ENCODE measurements at regions of chr7 and their contacts with region 1.

Region 1: GRCh38 chr7:51141451-51142003 is 175.1 kb downstream of the COBL start:
- DNase-seq: peak; percentile 56
- H3K4me3 Mint-ChIP-seq: no peak overlapping the region
- H3K27ac Mint-ChIP-seq: peak overlapping the region; percentile 70
- H3K4me1 Mint-ChIP-seq: peaks cover 53% of the 10 kb centered on the region
- H3K27me3 Mint-ChIP-seq: no peaks in the 10 kb centered on the region
- CTCF ChIP-seq: peak; percentile 72

Region 2: DNA sequence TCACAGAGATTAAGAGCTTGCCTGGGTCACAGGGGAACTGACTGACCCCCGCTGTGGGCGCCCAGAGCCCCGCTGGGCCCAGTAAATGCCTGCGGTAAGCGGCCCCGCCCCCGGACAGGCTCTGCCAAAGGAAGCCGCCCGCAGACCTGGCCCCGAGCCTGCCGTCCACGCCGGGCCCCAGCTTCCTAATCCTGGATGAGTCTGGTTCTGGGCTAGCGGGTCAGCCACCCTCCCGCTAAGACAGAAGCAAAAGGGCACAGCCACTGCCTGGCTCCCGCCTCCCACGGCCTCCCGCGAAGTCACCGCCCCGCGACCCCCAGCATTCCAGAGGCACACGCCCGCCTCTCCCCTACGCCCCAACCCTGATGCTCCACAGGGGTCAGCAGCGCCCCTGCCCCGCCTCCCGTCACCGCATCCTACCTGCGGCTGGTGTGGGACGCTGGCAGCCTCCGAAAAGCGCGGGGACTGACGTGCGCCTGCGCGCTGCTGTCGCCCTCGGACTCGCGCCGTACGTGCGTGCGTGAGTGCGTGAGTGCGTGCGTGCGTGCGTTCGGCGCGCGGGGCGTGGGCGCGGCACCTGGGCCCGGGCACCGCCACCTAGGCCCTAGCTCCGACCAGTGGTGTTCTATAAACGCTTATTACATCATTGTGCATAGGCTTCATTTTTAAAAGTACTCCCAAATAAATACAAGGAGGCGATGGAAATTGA is 691.5 kb before region 1 on chr7 and contains the start of gene FIGNL1:
- CTCF ChIA-PET with region 1: interaction called, 3 read pairs
- intact Hi-C with region 1: loop called (anchors 5 kb)
- DNase-seq: peak; percentile 91
- H3K4me3 Mint-ChIP-seq: peak within 1 kb of the TSS; percentile 99
- H3K27ac Mint-ChIP-seq: peak within 1 kb of the TSS; percentile 88
- H3K4me1 Mint-ChIP-seq: peaks cover 29% of the 10 kb centered on the region
- H3K27me3 Mint-ChIP-seq: peaks cover 19% of the 10 kb centered on the region
- CTCF ChIP-seq: no peak
- total RNA-seq, gene FIGNL1: 36.3 and 42.5 TPM in 2 replicates

Region 3: GRCh38 chr7:50679218-50680007 is 462.1 kb before region 1 on chr7:
- CTCF ChIA-PET with region 1: interaction called, 5 read pairs
- intact Hi-C with region 1: loop called (anchors 5 kb)
- DNase-seq: no peak
- H3K4me3 Mint-ChIP-seq: no peak overlapping the region
- H3K27ac Mint-ChIP-seq: no peak overlapping the region
- H3K4me1 Mint-ChIP-seq: peaks cover 36% of the 10 kb centered on the region
- H3K27me3 Mint-ChIP-seq: no peaks in the 10 kb centered on the region
- CTCF ChIP-seq: no peak

Region 4: DNA sequence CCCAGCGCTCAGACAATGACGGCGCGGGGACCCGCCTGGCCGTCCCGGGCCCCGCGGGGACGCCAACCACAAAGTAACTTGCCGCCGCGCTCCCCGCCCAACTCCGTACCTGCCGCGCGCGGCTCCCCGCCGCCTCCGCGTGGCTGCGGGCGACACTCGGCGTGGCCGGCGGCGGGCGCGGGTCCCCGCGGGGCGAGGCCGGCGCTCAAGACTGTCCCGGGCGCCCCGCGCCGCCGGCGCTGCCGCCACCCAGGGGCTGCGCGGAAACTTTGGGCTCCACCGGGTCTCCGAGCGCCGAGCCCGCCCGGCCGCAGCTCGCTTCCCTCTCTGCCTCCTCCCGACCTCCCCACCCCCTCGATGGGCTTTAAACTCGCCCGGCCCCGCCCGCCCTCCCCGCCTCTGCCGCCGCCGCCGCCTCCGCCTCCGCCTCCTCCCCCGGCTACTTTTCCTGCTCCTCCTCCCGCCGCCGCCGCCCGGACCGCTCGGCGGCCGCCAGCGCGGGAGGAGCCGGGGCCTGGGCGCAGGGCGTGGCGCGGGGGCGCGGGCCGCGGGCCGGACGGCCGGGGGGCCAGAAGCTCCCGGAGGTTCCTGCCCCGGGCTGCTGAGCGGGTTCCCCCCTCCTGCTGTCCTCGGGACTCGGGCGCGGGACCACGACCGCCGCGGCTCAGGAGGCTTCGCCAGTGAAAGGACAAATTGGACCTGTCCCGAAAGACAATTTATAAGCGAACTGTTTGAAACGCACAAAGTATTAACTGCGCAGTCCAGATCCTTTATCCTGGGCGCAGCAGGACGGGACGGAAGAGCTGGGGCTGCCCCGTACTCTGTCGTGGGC is 348.2 kb before region 1 on chr7:
- CTCF ChIA-PET with region 1: interaction called, 9 read pairs
- intact Hi-C with region 1: loop called (anchors 1 kb)
- DNase-seq: peak; percentile 80
- H3K4me3 Mint-ChIP-seq: peak overlapping the region; percentile 91
- H3K27ac Mint-ChIP-seq: peak overlapping the region; percentile 7
- H3K4me1 Mint-ChIP-seq: peaks cover 32% of the 10 kb centered on the region
- H3K27me3 Mint-ChIP-seq: no peaks in the 10 kb centered on the region
- CTCF ChIP-seq: no peak

Region 5: DNA sequence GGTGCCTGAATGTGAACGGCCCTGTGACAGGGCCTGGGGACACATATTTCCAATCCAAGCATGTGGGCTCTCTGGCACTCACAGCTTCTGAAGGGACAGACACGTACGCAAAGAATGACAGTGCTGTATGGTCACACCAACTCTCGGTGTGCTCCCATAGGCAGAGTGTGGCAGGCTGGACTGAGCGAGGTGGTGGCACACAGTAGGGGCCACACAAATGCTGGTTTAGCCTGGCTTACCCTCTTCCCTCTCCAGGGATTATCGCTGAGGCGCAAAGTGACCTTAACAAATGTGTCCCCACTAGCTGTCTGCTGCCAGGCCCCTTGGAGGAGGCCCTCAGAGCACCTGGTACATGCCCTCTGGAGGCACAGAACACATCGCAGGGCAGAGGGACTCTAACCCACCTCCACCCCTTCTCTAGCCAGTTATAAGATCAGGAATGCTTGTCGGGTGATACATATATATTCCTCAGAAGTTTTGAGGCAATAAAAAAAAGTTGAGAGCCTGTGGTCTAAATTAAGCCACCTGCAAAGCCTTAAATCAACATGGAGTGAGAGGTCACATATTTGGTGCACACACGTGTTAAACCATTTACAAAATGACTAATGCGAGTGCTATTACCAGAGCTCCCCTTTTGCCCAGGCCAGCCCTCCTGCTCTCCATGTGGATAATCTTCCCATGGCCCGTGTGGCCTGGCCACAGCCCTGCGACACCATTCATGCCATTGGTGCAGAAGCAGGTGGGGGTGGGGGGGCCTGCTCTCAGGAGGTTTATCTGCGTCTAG is 96.0 kb before region 1 on chr7:
- CTCF ChIA-PET with region 1: interaction called, 7 read pairs
- intact Hi-C with region 1: loop called (anchors 2 kb)
- DNase-seq: peak; percentile 82
- H3K4me3 Mint-ChIP-seq: peak overlapping the region; percentile 43
- H3K27ac Mint-ChIP-seq: peak overlapping the region; percentile 48
- H3K4me1 Mint-ChIP-seq: peaks cover 36% of the 10 kb centered on the region
- H3K27me3 Mint-ChIP-seq: no peaks in the 10 kb centered on the region
- CTCF ChIP-seq: no peak